Activated CD4-positive, alpha-beta T cell treated with anti-CD3 and anti-CD28 coated beads, Interleukin-2, amount 10 ng/mL, durations not matched to agents 24 days and 14 days (primary cell): ENCODE measurements at regions of chrX and their contacts with region 1.

Region 1: DNA sequence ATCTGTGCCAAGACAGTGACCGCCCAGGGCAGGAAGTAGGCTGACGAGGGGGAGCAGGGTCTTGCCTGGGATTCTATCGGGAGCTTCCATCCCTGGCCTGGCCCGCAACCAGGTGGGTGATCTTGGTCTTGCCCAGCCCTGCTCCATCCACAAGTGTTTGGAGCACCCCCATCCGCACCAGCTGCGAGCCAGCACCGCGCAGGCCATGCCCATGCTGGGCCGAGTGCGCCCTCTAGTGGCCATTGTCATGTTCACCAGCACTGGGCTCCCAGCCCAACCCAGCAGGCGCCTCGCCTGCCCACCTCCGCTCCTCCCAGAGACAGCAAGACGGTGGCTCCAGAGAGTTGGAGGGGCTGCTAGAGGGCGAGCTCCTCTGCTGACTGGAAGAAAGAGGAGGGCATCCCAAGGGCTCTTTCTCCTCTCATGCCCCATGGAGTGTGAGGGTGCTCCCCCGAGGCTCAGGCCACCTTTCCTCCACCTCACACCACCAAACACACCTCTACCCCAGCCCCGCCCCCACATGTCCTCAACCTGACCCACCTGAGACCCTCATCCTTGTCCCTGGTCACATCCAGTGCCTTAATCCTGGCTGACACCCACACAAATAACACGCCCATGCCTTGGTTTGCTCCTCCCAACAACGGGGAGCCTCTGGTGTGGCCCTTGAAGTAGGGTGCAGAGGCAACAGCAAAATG is 9.8 kb upstream of the ATP2B3 start:
- DNase-seq: peak; percentile 94
- H3K4me3 Mint-ChIP-seq: no peak overlapping the region
- H3K27ac Mint-ChIP-seq: no peak overlapping the region
- H3K4me1 Mint-ChIP-seq: no peaks in the 10 kb centered on the region
- H3K27me3 Mint-ChIP-seq: no peaks in the 10 kb centered on the region

Region 2: GRCh38 chrX:152941328-152942106 is 566.1 kb before region 1 on chrX:
- intact Hi-C with region 1: loop called (anchors 1 kb)
- DNase-seq: peak; percentile 96
- H3K4me3 Mint-ChIP-seq: peak overlapping the region; percentile 88
- H3K27ac Mint-ChIP-seq: peak overlapping the region; percentile 84
- H3K4me1 Mint-ChIP-seq: peaks cover 4% of the 10 kb centered on the region
- H3K27me3 Mint-ChIP-seq: no peaks in the 10 kb centered on the region

Region 3: GRCh38 chrX:153032397-153033118 is 475.1 kb before region 1 on chrX:
- intact Hi-C with region 1: loop called (anchors 1 kb)
- DNase-seq: peak; percentile 90
- H3K4me3 Mint-ChIP-seq: peak overlapping the region; percentile 86
- H3K27ac Mint-ChIP-seq: peak overlapping the region; percentile 85
- H3K4me1 Mint-ChIP-seq: peaks cover 4% of the 10 kb centered on the region
- H3K27me3 Mint-ChIP-seq: no peaks in the 10 kb centered on the region

Region 4: DNA sequence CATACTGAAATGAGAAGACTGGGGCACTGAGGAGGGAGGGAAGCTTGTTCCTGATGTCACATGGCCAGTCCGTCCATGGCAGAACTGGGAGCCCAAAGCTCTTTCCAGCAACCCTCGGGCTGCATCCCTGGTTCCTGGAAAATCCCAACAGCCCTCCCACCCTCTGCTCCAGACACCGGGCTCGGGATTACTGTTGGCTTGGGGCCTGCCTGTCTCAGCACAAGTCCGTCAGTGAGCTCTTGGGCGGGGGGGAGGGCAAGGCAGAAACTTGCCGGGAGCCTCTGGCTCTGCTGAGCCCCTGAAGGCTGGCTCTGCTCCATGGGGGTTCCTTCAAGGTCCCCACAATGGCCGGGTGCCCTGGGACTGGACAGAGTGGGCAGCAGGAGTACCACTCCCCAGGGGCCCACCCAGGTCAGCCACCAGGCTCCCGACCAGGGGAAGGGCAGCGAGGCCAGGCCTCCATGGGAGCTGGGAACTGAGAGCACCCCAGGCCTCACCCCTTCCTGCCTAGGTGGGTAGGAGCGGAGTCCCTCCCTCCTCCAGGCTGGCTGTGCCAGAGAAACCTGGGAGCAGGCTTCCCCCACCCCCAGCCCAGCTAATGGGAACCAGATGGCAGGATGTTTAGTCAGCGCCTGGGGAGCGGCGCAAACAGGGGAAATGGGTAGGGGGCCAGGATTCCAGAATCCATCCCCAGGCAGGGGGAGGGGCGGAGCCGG is 30.8 kb before region 1 on chrX:
- intact Hi-C with region 1: no loop called
- DNase-seq: no peak
- H3K4me3 Mint-ChIP-seq: no peak overlapping the region
- H3K27ac Mint-ChIP-seq: no peak overlapping the region
- H3K4me1 Mint-ChIP-seq: no peaks in the 10 kb centered on the region
- H3K27me3 Mint-ChIP-seq: peaks cover 6% of the 10 kb centered on the region